ENCODE measurements at regions of chr15 and their contacts with region 1.

Region 1: DNA sequence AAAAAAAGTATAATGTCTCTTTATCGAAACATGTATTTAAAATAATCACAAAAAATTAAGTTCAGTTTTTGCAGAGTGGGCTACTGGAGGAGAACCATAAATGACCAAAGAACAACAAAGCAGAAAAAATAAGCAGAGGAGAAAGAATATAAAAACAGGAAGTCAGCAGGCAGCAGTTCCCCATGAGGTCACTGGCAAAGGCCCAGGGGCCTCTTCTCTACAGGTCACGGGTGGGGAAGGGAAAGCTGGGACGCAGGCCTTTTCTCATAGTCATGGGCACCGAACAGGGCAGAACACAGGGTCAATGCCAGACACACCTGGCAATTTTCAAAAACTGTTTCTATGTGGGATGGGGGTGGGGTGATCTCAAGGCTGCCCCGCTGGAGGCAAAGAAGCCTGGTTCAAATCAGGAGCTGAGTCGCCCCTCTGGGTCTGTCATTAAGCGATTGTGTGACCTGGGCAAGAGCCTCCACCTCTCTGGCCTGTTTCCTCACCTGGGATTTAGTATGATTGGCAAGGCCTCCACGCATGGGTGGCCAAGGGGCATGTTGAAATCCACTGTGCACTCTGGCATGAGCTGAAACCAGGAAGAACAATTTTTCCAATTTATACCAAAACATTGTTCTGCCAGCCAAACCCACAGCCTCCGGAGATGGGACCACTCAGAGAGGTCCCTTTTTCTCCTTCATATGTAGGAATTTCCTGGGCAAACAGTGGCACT is 43.8 kb upstream of the UACA start:
- DNase-seq: no peak
- ATAC-seq: no peak
- H3K4me3 Mint-ChIP-seq: no peak overlapping the region
- H3K27ac Mint-ChIP-seq: no peak overlapping the region
- H3K4me1 Mint-ChIP-seq: no peaks in the 10 kb centered on the region
- H3K27me3 Mint-ChIP-seq: peaks cover 1% of the 10 kb centered on the region
- CTCF ChIP-seq: no peak

Region 2: GRCh38 chr15:70679919-70680231 is 127.3 kb before region 1 on chr15:
- CTCF ChIA-PET with region 1: interaction called, 23 read pairs
- POLR2A ChIA-PET with region 1: no interaction called
- intact Hi-C with region 1: loop called (anchors 5 kb)
- DNase-seq: no peak
- ATAC-seq: no peak
- H3K4me3 Mint-ChIP-seq: no peak overlapping the region
- H3K27ac Mint-ChIP-seq: no peak overlapping the region
- H3K4me1 Mint-ChIP-seq: no peaks in the 10 kb centered on the region
- H3K27me3 Mint-ChIP-seq: peaks cover 6% of the 10 kb centered on the region
- CTCF ChIP-seq: peak; percentile 35

Region 3: DNA sequence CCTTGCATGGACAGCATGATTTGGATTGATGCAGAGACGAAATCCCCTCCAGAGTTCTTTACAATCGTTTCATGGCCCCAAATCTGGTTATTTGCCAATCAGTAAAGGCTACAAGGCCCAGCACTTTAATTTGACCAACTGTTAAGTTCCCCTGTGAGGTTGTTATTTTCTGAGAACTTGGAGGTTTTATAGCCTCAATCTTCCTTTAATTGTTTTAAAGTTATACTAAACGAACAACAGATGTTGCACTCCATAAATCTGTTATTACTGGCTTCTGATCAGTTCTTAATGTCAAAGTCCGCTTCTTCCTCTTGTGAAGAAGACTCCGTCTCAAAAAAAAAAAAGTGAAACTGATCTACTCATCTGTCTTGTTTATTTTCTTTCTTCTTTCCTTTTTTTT is 16.0 kb after region 1 on chr15:
- CTCF ChIA-PET with region 1: interaction called, 20 read pairs
- POLR2A ChIA-PET with region 1: no interaction called
- intact Hi-C with region 1: no loop called
- DNase-seq: no peak
- ATAC-seq: no peak
- H3K4me3 Mint-ChIP-seq: no peak overlapping the region
- H3K27ac Mint-ChIP-seq: no peak overlapping the region
- H3K4me1 Mint-ChIP-seq: no peaks in the 10 kb centered on the region
- H3K27me3 Mint-ChIP-seq: peaks cover 7% of the 10 kb centered on the region
- CTCF ChIP-seq: no peak

Measured in activated CD8-positive, alpha-beta T cell treated with anti-CD3 and anti-CD28 coated beads for 36 hours (primary cell).